Psoas muscle (tissue), 8 donors: ENCODE measurements at regions of chr9 and their contacts with region 1.

Region 1: DNA sequence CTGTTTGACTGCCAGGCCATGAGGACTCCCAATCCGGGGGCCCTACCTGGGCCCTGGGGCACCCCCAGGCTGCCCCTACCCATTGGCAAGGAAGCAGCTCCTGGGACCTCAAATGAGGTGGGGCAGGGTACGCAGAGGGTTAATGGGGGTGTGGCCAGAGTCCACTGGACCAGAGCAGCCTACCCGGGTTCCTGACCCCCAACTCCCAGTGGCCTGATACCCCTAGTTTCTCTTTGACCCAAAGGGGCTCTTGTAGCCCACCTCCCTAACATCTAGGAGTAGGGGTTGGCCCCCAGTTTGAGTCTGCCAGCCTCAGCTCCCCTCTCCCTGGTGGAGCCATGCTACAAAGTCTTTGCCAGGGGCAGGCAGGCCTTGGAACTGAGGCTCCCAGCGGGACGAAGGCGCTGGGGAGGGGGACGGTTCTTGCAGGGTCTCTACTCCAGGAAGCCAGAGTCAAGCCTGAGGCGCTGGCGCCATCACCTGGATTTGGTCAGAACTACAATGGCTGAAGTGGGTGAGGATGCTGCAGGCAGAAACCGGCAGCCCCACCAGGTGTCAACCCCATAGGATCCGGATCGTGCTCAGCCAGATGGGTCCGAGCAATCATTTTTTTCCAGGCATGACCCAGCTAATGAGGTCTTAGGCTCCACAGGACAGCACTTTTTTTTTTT is 8.4 kb upstream of the CERCAM start:
- DNase-seq: peak; percentile 36 to 63
- ATAC-seq: peak in 3 of 4 donors; percentile 47 to 67 (median 60)
- H3K4me3 ChIP-seq: no peak overlapping the region
- H3K27ac ChIP-seq: no peak overlapping the region
- H3K4me1 ChIP-seq: no peaks in the 10 kb centered on the region
- H3K27me3 ChIP-seq: peaks cover 0 to 60% (median 7%) of the 10 kb centered on the region in 3 donors
- CTCF ChIP-seq: peak; percentile 59

Region 2: GRCh38 chr9:128117613-128118471 is 294.4 kb before region 1 on chr9:
- intact Hi-C with region 1: no loop called
- DNase-seq: peak; percentile 95 to 97
- ATAC-seq: peak; percentile 68 to 83 (median 78)
- H3K4me3 ChIP-seq: no peak overlapping the region
- H3K27ac ChIP-seq: no peak overlapping the region
- H3K4me1 ChIP-seq: no peaks in the 10 kb centered on the region
- H3K27me3 ChIP-seq: no peaks in the 10 kb centered on the region
- CTCF ChIP-seq: peak; percentile 100

Region 3: GRCh38 chr9:128296337-128297220 is 115.7 kb before region 1 on chr9:
- intact Hi-C with region 1: loop called in 1 of 2 experiments (anchors 10 kb)
- DNase-seq: no peak
- ATAC-seq: no peak
- H3K4me3 ChIP-seq: no peak overlapping the region
- H3K27ac ChIP-seq: no peak overlapping the region
- H3K4me1 ChIP-seq: no peaks in the 10 kb centered on the region
- H3K27me3 ChIP-seq: no peaks in the 10 kb centered on the region
- CTCF ChIP-seq: no peak

Region 4: DNA sequence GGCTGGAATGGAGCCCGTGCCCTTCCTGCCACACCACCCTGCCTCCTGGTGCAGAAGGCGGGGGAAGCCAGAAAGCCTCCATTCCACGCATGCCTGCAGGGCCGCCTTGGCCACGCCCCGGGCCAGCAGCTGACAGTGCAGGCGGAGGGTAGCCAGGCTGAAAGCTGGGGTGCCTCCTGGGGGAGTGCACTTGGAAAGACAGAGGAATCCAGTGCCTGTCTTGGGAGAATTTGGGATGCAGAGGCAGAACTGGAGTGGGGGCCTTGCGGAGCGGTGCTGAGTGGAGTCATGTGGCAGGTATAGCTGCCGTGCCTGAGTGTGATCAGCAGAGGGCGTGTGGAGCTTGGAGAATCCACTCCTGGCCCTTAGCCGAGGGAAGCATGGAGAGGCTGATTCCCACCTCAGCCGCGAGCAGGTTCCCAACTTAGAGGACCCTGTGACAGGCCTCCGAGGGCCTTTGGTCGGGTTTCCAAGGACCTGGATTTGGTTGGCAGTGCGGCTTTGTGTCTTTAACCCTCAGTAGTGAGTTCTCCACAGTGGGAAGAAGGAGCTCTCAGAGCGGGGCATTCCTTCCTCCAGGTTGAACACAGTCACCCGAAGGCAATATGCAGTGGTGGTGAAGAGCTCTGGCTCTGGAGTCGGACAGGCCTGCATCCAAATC is 50.1 kb before region 1 on chr9:
- intact Hi-C with region 1: loop called (anchors 1 to 5 kb)
- DNase-seq: peak; percentile 79 to 90
- ATAC-seq: peak; percentile 92 to 96 (median 94)
- H3K4me3 ChIP-seq: peak overlapping the region; percentile 62
- H3K27ac ChIP-seq: peak overlapping the region; percentile 24
- H3K4me1 ChIP-seq: peaks cover 22% of the 10 kb centered on the region
- H3K27me3 ChIP-seq: peaks cover 0 to 8% (median 3%) of the 10 kb centered on the region in 3 donors
- CTCF ChIP-seq: peak; percentile 87